B cell (primary cell): ENCODE measurements at regions of chr20 and their contacts with region 1.

Region 1: GRCh38 chr20:46307139-46307998 is 929 bp downstream of the CDH22 start:
- DNase-seq: peak; percentile 79
- ATAC-seq: peak; percentile 85
- H3K4me3 ChIP-seq: peak overlapping the region in 4 of 5 experiments; percentile 19 to 52 (median 42)
- H3K4me3 Mint-ChIP-seq: peak overlapping the region; percentile 76
- H3K27ac ChIP-seq: no peak overlapping the region
- H3K27ac Mint-ChIP-seq: no peak overlapping the region
- H3K4me1 ChIP-seq: peaks cover 14 to 19% of the 10 kb centered on the region in 2 donors
- H3K4me1 Mint-ChIP-seq: peaks cover 14% of the 10 kb centered on the region
- H3K27me3 ChIP-seq: peaks cover 0 to 72% (median 41%) of the 10 kb centered on the region in 4 experiments
- H3K27me3 Mint-ChIP-seq: peaks cover 75% of the 10 kb centered on the region
- CTCF ChIP-seq: peak; percentile 86

Region 2: DNA sequence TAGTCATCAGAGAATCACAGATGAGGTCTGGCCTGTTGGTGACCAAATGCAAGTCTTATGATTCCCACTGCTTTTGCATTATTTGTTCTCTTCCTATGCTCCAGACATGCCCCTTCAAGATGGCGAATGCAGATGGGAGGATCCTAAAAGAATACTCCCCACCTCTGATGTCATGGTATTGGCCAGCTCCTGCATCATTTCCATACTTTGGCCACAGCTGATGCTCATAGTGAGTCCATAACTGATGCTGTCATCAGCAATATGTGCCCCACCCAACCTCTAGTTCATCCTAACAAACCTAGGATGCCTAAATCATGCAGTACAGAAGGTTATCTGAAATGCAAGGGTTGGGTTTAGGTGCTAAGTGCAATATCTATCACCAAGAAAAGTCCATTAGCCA is 670.9 kb before region 1 on chr20:
- CTCF ChIA-PET with region 1: no interaction called
- POLR2A ChIA-PET with region 1: no interaction called
- intact Hi-C with region 1: no loop called
- DNase-seq: no peak
- ATAC-seq: no peak
- H3K4me3 ChIP-seq: no peak overlapping the region
- H3K4me3 Mint-ChIP-seq: no peak overlapping the region
- H3K27ac ChIP-seq: no peak overlapping the region
- H3K27ac Mint-ChIP-seq: no peak overlapping the region
- H3K4me1 ChIP-seq: no peaks in the 10 kb centered on the region
- H3K4me1 Mint-ChIP-seq: no peaks in the 10 kb centered on the region
- H3K27me3 ChIP-seq: no peaks in the 10 kb centered on the region
- H3K27me3 Mint-ChIP-seq: peaks cover 28% of the 10 kb centered on the region
- CTCF ChIP-seq: no peak

Region 3: DNA sequence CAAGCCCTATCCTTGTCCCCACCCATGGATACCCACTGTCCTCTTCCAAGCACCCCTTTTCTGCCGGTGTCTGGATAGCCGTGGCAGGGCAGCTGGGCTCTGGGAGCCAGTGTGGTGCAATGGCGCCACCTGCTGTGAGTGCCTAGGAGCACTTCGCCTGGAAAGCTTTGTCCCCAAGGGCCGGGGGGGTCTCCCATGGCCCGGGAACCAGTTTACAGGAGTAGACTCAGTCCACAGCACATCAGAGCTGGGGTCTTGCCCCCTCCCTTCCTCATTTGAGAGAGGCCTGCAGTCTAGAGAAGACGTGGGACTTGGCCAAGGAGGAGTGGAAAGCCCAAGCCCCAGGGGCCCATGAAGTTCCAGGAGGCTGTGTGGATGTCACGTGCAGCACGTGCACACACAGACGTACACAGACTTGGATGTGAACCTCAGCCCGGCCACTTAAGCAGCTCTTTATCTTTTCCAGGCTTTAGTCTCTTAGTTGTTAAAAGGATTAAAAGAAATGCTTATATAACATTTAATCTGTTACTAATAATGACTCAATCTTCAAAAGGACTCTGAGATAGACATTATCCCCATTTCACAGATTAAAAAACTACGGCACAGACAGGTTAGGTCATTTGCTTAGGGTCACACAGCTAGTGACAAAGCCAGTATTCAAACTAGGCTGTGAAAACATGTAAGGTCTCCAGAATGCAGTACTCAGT is 41.8 kb after region 1 on chr20:
- CTCF ChIA-PET with region 1: interaction called, 19 read pairs
- POLR2A ChIA-PET with region 1: no interaction called
- intact Hi-C with region 1: no loop called
- DNase-seq: peak; percentile 45
- ATAC-seq: peak; percentile 28
- H3K4me3 ChIP-seq: no peak overlapping the region
- H3K4me3 Mint-ChIP-seq: no peak overlapping the region
- H3K27ac ChIP-seq: no peak overlapping the region
- H3K27ac Mint-ChIP-seq: peak overlapping the region; percentile 65
- H3K4me1 ChIP-seq: peaks cover 9 to 25% of the 10 kb centered on the region in 2 donors
- H3K4me1 Mint-ChIP-seq: peaks cover 27% of the 10 kb centered on the region
- H3K27me3 ChIP-seq: no peaks in the 10 kb centered on the region
- H3K27me3 Mint-ChIP-seq: no peaks in the 10 kb centered on the region
- CTCF ChIP-seq: peak; percentile 63

Region 4: DNA sequence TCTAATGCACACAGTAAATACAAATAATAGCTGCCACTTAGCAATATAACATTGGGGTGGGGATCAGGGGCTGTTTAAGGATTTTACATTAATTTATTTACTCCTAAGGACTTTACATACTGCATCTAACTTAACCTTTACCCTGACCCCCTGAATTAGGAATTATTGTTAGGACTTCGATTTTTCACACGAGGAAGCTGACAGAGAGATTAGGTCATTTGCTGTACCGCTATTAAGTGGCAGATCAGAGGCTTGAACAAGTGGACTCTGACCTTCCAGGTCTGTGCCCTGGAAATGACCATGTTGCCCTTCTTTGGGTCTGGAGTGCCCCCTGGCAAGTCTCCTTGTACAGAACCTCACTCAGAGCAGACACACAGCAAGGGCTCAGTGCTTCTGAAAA is 104.3 kb after region 1 on chr20:
- CTCF ChIA-PET with region 1: interaction called, 15 read pairs
- POLR2A ChIA-PET with region 1: interaction called, 4 read pairs
- intact Hi-C with region 1: loop called (anchors 1 kb)
- DNase-seq: no peak
- ATAC-seq: no peak
- H3K4me3 ChIP-seq: no peak overlapping the region
- H3K4me3 Mint-ChIP-seq: no peak overlapping the region
- H3K27ac ChIP-seq: no peak overlapping the region
- H3K27ac Mint-ChIP-seq: no peak overlapping the region
- H3K4me1 ChIP-seq: peaks cover 6 to 16% of the 10 kb centered on the region in 2 donors
- H3K4me1 Mint-ChIP-seq: peaks cover 18% of the 10 kb centered on the region
- H3K27me3 ChIP-seq: peaks cover 0 to 24% (median 11%) of the 10 kb centered on the region in 4 experiments
- H3K27me3 Mint-ChIP-seq: peaks cover 17% of the 10 kb centered on the region
- CTCF ChIP-seq: no peak

Region 5: DNA sequence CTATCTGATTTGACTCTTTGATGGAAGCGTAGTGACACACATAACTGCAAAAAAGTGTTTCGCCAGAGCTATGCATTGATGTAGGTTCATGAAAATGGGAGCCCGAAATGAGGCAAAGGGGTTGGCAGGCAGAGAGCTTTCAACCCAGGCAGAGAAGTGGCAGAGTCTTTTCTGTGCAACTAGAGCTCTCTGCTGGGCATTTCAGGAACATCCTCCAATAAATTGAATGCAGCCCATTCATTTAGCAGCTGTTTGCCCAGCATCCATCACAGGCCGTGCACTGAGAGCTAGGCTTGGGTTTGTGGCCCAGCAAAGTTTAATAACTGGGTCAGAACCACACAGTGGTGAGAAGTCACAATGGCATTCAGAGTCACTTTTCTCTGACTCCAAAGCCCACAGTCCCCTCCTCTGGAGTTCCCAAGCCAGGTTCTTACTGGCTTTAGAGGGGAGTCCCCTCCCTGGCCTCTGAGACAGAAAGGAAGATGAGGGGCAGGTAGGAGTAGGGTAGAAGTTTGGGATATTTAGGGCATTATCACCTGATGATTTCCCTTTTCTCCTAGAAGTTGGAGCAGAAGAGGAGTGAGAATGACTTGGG is 130.9 kb after region 1 on chr20:
- CTCF ChIA-PET with region 1: interaction called, 10 read pairs
- POLR2A ChIA-PET with region 1: no interaction called
- intact Hi-C with region 1: loop called (anchors 1 kb)
- DNase-seq: peak; percentile 24
- ATAC-seq: no peak
- H3K4me3 ChIP-seq: no peak overlapping the region
- H3K4me3 Mint-ChIP-seq: no peak overlapping the region
- H3K27ac ChIP-seq: no peak overlapping the region
- H3K27ac Mint-ChIP-seq: no peak overlapping the region
- H3K4me1 ChIP-seq: no peaks in the 10 kb centered on the region
- H3K4me1 Mint-ChIP-seq: no peaks in the 10 kb centered on the region
- H3K27me3 ChIP-seq: peaks cover 0 to 5% (median 1%) of the 10 kb centered on the region in 4 experiments
- H3K27me3 Mint-ChIP-seq: peaks cover 41% of the 10 kb centered on the region
- CTCF ChIP-seq: no peak